ENCODE measurements at regions of chr5 and their contacts with region 1.

Region 1: GRCh38 chr5:137320056-137321045 is 178.8 kb downstream of the SPOCK1 start:
- DNase-seq: no peak
- H3K4me3 ChIP-seq: no peak overlapping the region
- H3K27me3 ChIP-seq: no peaks in the 10 kb centered on the region
- CTCF ChIP-seq: peak; percentile 84

Region 2: DNA sequence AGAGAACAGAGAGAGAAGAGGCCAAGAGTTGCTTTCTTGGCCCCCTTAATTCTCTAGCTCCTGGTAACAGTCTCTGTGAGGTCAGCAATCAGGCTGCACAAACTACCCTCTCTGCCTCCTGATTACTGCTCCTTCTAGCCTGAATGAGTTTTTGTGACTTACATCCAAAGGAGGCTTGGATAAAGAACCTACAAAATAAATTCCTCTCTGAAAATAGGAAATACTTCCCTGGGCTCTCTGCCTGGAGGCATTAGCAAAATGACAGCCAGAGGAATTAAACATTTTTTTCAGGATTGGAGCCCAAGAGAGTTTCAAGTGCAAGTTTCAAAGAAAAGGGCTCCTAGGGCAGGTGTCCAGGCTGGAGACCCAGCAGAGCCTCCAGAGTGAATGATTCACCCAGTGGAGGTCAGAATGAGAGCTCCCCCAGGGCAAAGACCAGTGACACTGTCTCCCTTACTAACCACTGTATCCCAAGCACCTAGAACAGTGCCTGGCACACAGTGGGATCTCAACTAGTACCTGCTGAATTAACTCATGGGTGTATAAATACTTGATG is 16.3 kb after region 1 on chr5:
- CTCF ChIA-PET with region 1: interaction called, 26 read pairs
- POLR2A ChIA-PET with region 1: no interaction called
- DNase-seq: no peak
- H3K4me3 ChIP-seq: no peak overlapping the region
- H3K27me3 ChIP-seq: no peaks in the 10 kb centered on the region
- CTCF ChIP-seq: no peak

Region 3: GRCh38 chr5:137344723-137345322 is 24.5 kb after region 1 on chr5:
- CTCF ChIA-PET with region 1: interaction called, 27 read pairs
- POLR2A ChIA-PET with region 1: no interaction called
- DNase-seq: no peak
- H3K4me3 ChIP-seq: no peak overlapping the region
- H3K27me3 ChIP-seq: no peaks in the 10 kb centered on the region
- CTCF ChIP-seq: peak; percentile 88

Region 4: DNA sequence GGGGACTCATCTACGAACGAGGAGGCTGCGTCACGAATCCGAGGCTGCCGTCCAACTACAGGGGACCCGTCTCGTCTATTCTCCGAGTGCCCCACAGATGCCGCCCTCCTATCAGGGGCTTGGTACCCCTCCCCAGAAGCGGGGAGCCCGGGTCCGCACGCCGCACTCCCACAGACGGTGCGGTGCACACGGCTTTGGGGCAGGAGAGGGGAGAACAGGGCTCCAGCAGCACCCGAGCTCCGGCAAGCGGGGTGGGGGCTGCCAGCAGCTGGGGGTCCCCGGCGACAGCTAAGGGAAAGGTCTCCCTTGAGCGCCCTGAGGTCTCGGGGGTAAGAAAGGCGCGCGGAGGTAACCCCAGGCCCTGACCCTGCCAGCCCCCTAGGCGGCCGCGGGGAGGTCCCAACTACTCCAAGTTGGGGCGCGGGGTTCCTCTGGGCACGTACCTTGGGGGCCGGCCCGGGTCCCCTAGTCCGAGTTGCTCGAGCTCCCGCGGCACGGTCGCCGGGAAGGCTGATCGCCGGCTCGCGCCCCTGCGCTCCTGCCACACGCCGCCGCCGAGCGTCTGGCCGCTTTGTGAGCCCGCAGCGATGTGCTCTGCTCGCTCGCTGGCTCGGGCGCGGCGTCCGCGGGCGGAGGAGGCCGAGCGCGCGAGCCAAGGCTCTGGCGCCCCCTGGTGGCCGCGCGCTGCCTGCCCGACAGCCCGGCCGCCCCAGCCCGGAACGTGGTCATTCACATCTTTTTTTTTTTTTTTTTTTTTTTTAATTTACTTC is 178.6 kb after region 1 on chr5 and contains the start of gene SPOCK1:
- CTCF ChIA-PET with region 1: interaction called, 110 read pairs
- POLR2A ChIA-PET with region 1: no interaction called
- DNase-seq: peak; percentile 8
- H3K4me3 ChIP-seq: peak within 1 kb of the TSS; percentile 57
- H3K27me3 ChIP-seq: peaks cover 2% of the 10 kb centered on the region; the same call in 1 of the 2 replicates
- CTCF ChIP-seq: peak; percentile 49
- polyA plus RNA-seq, gene SPOCK1: 293 and 304 TPM in 2 replicates

Measured in BJ (cell line).